Naive thymus-derived CD8-positive, alpha-beta T cell (primary cell): ENCODE measurements at regions of chr14 and their contacts with region 1.

Region 1: DNA sequence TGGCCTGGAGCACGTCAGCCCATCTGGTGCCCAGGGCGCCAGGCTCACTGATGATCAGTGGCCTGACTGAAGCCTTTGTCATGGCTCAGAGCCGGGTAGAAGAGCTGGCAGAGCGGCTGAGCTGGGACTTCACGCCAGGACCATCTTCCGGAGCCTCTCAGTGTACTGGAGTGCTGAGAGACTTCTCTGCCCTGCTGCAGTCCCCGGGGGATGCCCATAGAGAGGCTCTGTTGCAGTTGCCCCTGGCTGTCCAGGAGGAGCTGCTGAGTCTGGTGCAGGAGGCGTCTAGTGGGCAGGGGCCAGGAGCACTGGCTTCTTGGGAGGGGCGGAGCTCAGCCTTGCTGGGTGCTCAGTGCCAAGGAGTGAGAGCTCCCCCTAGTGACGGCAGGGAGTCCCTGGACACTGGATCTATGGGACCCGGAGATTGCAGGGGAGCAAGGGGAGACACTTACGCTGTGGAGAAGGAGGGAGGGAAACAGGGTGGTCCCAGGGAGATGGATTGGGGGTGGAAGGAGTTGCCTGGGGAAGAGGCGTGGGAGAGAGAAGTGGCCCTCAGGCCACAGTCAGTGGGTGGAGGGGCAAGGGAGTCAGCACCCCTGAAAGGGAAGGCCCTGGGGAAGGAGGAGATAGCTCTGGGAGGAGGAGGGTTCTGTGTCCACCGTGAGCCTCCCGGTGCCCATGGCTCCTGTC is 2.0 kb downstream of the KHNYN start:
- DNase-seq: peak; percentile 79 to 94 (median 86)
- ATAC-seq: peak; percentile 53 to 58
- H3K4me3 Mint-ChIP-seq: peak overlapping the region; percentile 85 to 94 (median 90)
- H3K27ac Mint-ChIP-seq: peak overlapping the region; percentile 88 to 98 (median 96)
- H3K4me1 Mint-ChIP-seq: peaks cover 26 to 58% (median 49%) of the 10 kb centered on the region in 4 donors
- H3K27me3 Mint-ChIP-seq: no peaks in the 10 kb centered on the region

Region 2: GRCh38 chr14:24271134-24271833 is 160.4 kb before region 1 on chr14 and contains the start of gene RABGGTA:
- POLR2A ChIA-PET with region 1: interaction called, 17 read pairs
- DNase-seq: peak; percentile 87 to 98 (median 94)
- ATAC-seq: peak; percentile 86 to 91
- H3K4me3 Mint-ChIP-seq: peak within 1 kb of the TSS; percentile 78 to 94 (median 92)
- H3K27ac Mint-ChIP-seq: peak within 1 kb of the TSS; percentile 92 to 100 (median 99)
- H3K4me1 Mint-ChIP-seq: peaks cover 31 to 45% (median 41%) of the 10 kb centered on the region in 4 donors
- H3K27me3 Mint-ChIP-seq: no peaks in the 10 kb centered on the region
- polyA plus RNA-seq, gene RABGGTA: 12.7 to 22.1 (median 20.4) TPM

Region 3: GRCh38 chr14:24310646-24311604 is 120.8 kb before region 1 on chr14 and contains the start of gene LTB4R:
- POLR2A ChIA-PET with region 1: interaction called, 17 read pairs
- DNase-seq: peak; percentile 53 to 82 (median 67)
- ATAC-seq: peak; percentile 85 to 87
- H3K4me3 Mint-ChIP-seq: peak within 1 kb of the TSS; percentile 77 to 87 (median 82)
- H3K27ac Mint-ChIP-seq: peak within 1 kb of the TSS; percentile 82 to 95 (median 92)
- H3K4me1 Mint-ChIP-seq: peaks cover 41 to 80% (median 73%) of the 10 kb centered on the region in 4 donors
- H3K27me3 Mint-ChIP-seq: no peaks in the 10 kb centered on the region
- polyA plus RNA-seq, gene LTB4R: 3.4 to 5.9 (median 4.5) TPM

Region 4: DNA sequence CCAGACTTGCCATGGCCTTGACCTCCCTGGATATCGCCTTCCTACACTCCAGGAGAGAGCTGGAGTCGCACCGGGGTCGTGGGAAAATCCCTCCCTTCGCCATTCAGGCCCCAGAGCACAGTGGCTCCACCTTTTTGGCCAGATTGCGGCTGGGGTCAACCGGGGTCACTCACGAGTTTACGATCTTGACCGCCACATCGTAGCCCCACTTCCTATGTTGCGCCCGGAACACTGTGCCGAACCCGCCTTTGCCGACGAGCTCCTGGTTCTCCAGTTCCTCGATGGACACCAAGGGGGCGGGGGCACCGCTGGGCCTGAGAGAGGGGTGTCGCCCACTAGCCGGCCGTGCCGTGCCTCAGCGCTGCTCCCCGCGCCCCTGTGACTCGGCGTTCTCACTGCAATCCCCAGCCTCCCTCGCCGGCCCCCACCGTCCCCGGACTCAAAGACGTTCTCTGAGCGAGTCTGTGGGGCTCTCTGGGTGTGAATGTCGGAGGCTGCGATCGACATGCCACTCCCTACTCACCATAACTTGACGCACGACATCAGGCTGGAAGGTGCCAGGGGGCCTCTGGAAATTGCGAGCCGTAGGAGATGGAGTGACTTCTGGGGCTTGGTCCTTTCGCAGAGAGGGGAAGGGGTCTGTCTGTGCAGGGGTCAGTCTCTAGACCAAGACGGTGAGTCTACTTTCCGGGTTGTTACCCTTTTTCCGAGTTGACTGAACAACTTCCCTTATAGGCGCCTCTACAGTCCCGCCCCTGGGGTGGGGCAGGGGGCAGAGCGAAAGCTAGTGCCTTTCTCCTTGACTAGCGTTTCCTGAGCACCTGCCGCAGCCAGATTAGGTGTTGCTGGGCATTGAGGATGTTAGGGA is 92.2 kb before region 1 on chr14 and contains the start of gene RIPK3:
- POLR2A ChIA-PET with region 1: interaction called, 99 read pairs
- DNase-seq: peak; percentile 46 to 82 (median 62)
- ATAC-seq: peak; percentile 94 to 95
- H3K4me3 Mint-ChIP-seq: peak within 1 kb of the TSS; percentile 88 to 98 (median 96)
- H3K27ac Mint-ChIP-seq: peak within 1 kb of the TSS; percentile 70 to 98 (median 95)
- H3K4me1 Mint-ChIP-seq: peaks cover 12 to 38% (median 32%) of the 10 kb centered on the region in 4 donors
- H3K27me3 Mint-ChIP-seq: peaks cover 5 to 14% (median 12%) of the 10 kb centered on the region in 5 donors
- polyA plus RNA-seq, gene RIPK3: 5.3 to 11.1 (median 5.6) TPM

Region 5: DNA sequence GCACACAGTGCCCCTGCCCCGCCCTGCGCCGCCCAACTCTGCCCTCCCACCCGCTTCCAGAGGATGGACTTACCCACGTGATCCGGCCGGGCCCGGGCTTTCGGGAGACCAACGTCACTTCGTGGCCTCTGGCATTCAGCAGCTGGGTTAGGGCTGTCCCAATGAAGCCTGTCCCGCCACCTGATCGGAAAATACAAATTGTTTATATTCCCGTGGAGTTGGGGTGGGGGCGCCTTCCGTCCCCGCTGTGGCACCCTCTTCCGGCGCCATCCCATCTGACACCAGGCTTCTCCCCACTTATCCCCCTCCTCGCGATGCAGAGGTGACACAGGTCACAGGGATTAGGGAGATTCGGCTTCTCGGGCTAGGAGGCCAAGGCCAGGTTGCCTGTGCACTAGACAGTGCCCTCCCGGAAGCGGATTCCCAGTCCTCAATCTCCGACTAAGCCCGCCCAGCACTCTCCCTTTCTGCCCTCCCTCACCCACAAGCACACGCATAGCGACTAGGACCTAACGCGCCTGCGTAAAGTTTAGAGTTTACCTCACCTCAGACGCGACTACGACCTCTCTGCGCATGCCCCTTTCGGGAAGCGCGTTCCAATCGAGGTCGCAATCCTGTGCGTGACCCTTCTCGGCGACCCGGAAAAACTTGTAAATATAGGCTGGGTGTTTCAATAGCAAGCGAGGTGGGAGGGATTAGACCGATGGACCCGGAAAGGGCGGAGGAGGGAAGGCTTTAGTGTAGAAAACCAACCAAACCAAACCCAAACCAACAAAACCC is 10.7 kb after region 1 on chr14 and contains the start of gene SDR39U1:
- POLR2A ChIA-PET with region 1: interaction called, 110 read pairs
- DNase-seq: peak; percentile 84 to 99 (median 96)
- ATAC-seq: peak; percentile 88 to 89
- H3K4me3 Mint-ChIP-seq: peak within 1 kb of the TSS; percentile 90 to 98 (median 96)
- H3K27ac Mint-ChIP-seq: peak within 1 kb of the TSS; percentile 98 to 100 (median 99)
- H3K4me1 Mint-ChIP-seq: peaks cover 21 to 50% (median 45%) of the 10 kb centered on the region in 4 donors
- H3K27me3 Mint-ChIP-seq: no peaks in the 10 kb centered on the region
- polyA plus RNA-seq, gene SDR39U1: 70.3 to 90.8 (median 89.5) TPM